Dorsolateral prefrontal cortex (tissue), 120 donors: ENCODE measurements at regions of chr7 and their contacts with region 1.

Region 1: GRCh38 chr7:30983042-30983913 is 19.5 kb downstream of the GHRHR start:
- DNase-seq: peak; percentile 79 to 94 (median 87)
- H3K4me3 ChIP-seq: peak overlapping the region in 46 of 59 donors; percentile 12 to 57 (median 36)
- H3K27ac ChIP-seq: peak overlapping the region in 5 of 59 donors; percentile 9 to 46 (median 30)
- H3K27me3 ChIP-seq: peaks cover 0 to 31% (median 5%) of the 10 kb centered on the region in 45 donors
- CTCF ChIP-seq: peak; percentile 77 to 99 (median 94)

Region 2: GRCh38 chr7:31051598-31052486 is 68.6 kb after region 1 on chr7 and contains the start of gene ADCYAP1R1:
- intact Hi-C with region 1: loop called in 1 of 2 experiments (anchors 10 kb)
- DNase-seq: peak in 7 of 10 donors; percentile 49 to 77 (median 68)
- H3K4me3 ChIP-seq: peak within 1 kb of the TSS; percentile 19 to 80 (median 69)
- H3K27ac ChIP-seq: peak within 1 kb of the TSS in 50 of 59 donors; percentile 26 to 84 (median 71)
- H3K27me3 ChIP-seq: peaks cover 0 to 49% (median 14%) of the 10 kb centered on the region in 45 donors
- CTCF ChIP-seq: peak in 3 of 56 donors; percentile 16 to 50 (median 18)
- total RNA-seq, gene ADCYAP1R1: 47.8 to 194 (median 95.1) TPM

Region 3: DNA sequence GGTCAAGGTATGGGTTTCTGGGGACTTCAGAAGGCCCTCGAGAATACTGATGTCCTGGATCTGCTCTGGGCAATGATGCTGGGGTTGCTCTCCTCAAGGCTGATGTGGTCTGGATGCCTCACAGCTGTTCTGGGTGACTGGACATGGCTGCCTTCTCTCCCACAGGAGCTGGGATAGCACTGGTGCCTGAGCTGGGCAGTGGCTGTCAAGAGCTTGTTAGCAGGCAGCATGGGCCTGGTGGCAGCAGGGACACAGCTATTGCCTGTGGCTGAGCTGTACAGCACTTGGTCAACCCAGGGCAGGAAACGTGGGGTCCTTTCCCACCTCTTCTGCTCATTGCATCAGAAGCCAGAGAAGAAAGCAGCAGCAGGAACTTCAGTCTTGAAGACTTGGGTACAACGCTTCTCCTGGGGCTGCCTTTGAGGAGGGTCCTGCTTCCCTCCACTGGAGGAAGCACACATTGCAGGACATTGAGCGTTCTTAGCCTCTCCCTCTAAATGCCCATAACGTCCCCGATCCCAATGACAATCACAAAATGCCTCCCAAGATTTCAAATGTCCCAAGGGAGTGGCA is 81.8 kb after region 1 on chr7:
- intact Hi-C with region 1: loop called in 1 of 2 experiments (anchors 5 kb)
- DNase-seq: peak in 1 of 10 donors; percentile 30
- H3K4me3 ChIP-seq: no peak overlapping the region
- H3K27ac ChIP-seq: peak overlapping the region in 1 of 59 donors; percentile 14
- H3K27me3 ChIP-seq: no peaks in the 10 kb centered on the region
- CTCF ChIP-seq: no peak

Region 4: DNA sequence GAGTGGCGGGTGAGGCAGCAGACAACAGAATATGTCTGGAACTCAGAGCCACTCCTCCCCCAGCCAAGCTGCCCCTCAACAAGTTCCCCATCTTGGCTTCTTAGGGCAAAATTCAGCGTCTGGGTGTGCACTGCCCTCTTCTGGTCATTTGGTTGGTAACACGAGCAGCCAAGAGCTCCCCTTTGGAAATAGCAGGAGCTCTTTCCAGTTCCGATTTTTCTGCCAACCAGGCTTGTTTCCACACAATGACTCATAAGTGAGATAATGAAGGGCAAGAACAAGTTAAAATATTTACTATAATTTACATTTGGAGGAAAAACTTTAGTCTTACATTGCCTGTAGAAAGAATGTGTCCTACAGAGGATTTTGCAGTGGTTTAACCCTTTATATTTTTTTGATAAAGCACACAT is 139.4 kb after region 1 on chr7:
- intact Hi-C with region 1: loop called (anchors 1 to 2 kb)
- DNase-seq: peak in 7 of 10 donors; percentile 53 to 77 (median 74)
- H3K4me3 ChIP-seq: no peak overlapping the region
- H3K27ac ChIP-seq: no peak overlapping the region
- H3K27me3 ChIP-seq: peaks cover 0 to 44% (median 7%) of the 10 kb centered on the region in 45 donors
- CTCF ChIP-seq: peak; percentile 53 to 93 (median 85)